CD4-positive, alpha-beta T cell (primary cell): ENCODE measurements at regions of chrX and their contacts with region 1.

Region 1: GRCh38 chrX:136880452-136881013 is at the start of gene RBMX:
- DNase-seq: peak; percentile 82 to 94 (median 88)
- ATAC-seq: peak; percentile 83
- H3K4me3 ChIP-seq: peak within 1 kb of the TSS; percentile 97
- H3K4me3 Mint-ChIP-seq: peak within 1 kb of the TSS; percentile 100
- H3K27ac ChIP-seq: peak within 1 kb of the TSS; percentile 94 to 97
- H3K27ac Mint-ChIP-seq: peak within 1 kb of the TSS; percentile 99
- H3K4me1 ChIP-seq: peaks cover 28% of the 10 kb centered on the region
- H3K4me1 Mint-ChIP-seq: peaks cover 34% of the 10 kb centered on the region
- H3K27me3 ChIP-seq: no peaks in the 10 kb centered on the region
- H3K27me3 Mint-ChIP-seq: no peaks in the 10 kb centered on the region
- CTCF ChIP-seq: no peak
- total RNA-seq, gene RBMX: 310 to 317 TPM

Region 2: DNA sequence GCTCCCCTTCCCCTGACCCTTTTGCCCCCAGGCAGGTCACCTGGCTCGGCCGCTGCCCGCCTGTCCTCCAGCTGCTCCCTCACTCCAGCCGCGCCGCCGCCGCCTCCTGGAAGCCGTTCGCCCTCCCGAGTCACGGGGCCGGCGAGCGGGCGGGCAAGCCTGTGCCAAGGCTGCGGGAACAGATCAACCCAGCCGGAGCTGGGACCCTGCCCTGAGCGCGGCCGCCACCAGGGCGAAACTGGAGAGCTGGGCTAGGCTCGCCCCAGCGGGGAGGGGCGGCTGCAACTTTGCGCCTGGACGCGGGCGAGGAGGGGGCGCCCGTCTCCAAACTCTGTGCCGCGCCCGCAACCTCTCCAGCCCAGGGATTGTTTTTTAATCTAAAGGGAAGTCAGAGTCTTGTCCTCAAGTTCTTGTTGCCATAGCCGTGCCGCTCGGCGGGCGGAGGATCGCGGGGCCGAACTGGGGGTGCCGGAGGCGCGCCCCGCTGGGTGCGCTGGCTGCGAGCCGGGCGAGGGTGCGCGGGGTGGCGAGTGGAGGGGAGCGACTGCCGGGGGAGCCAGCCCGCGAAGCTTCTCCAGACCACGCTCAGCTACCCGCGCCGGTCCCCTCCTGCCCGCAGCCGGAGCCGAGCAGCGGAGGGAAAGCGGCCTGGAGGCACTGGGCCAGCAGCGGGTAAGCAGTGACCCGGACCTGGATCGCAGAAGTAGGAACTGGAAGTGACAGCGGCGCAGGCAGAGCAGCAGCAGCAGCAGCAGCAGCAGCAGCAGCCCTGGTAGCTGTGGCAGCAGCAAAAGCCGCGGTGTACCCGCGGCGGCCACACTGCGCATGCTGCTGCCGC is 113.2 kb before region 1 on chrX:
- CTCF ChIA-PET with region 1: no interaction called
- POLR2A ChIA-PET with region 1: interaction called, 36 read pairs
- intact Hi-C with region 1: loop called (anchors 2 to 10 kb)
- DNase-seq: peak in 13 of 14 experiments; percentile 28 to 78 (median 39)
- ATAC-seq: peak; percentile 77
- H3K4me3 ChIP-seq: peak overlapping the region; percentile 59
- H3K4me3 Mint-ChIP-seq: peak overlapping the region; percentile 87
- H3K27ac ChIP-seq: peak overlapping the region in 1 of 2 donors; percentile 53
- H3K27ac Mint-ChIP-seq: peak overlapping the region; percentile 93
- H3K4me1 ChIP-seq: peaks cover 50% of the 10 kb centered on the region
- H3K4me1 Mint-ChIP-seq: peaks cover 77% of the 10 kb centered on the region
- H3K27me3 ChIP-seq: no peaks in the 10 kb centered on the region
- H3K27me3 Mint-ChIP-seq: no peaks in the 10 kb centered on the region
- CTCF ChIP-seq: no peak

Region 3: DNA sequence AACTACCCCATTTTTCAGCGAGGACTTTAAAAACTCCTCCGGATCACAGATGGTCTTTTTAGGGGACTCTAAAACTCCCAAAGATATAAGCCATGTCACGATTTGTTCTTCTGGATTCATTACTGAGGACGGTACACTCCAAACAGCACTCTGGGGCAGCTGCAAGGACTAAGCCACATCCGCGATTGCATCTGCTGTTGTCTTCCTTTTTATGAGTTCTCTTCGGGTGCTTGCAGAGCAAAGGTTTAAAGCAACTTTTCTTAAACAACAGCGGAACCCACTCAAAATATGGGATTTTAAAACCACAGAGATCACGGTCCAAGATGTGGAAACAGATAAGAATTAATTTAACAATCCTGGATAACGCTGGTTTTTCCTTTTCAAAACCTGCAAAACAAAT is 99.8 kb before region 1 on chrX and contains the start of gene ARHGEF6:
- CTCF ChIA-PET with region 1: no interaction called
- POLR2A ChIA-PET with region 1: interaction called, 38 read pairs
- intact Hi-C with region 1: no loop called
- DNase-seq: peak in 12 of 14 experiments; percentile 9 to 66 (median 38)
- ATAC-seq: peak; percentile 60
- H3K4me3 ChIP-seq: peak within 1 kb of the TSS; percentile 79
- H3K4me3 Mint-ChIP-seq: peak within 1 kb of the TSS; percentile 98
- H3K27ac ChIP-seq: peak within 1 kb of the TSS; percentile 65 to 84
- H3K27ac Mint-ChIP-seq: peak within 1 kb of the TSS; percentile 95
- H3K4me1 ChIP-seq: peaks cover 29% of the 10 kb centered on the region
- H3K4me1 Mint-ChIP-seq: peaks cover 75% of the 10 kb centered on the region
- H3K27me3 ChIP-seq: no peaks in the 10 kb centered on the region
- H3K27me3 Mint-ChIP-seq: no peaks in the 10 kb centered on the region
- CTCF ChIP-seq: no peak
- total RNA-seq, gene ARHGEF6: 43.3 to 45.3 TPM

Region 4: GRCh38 chrX:136866337-136867095 is 14.0 kb before region 1 on chrX:
- CTCF ChIA-PET with region 1: interaction called, 3 read pairs
- POLR2A ChIA-PET with region 1: interaction called, 27 read pairs
- intact Hi-C with region 1: no loop called
- DNase-seq: no peak
- ATAC-seq: peak; percentile 14
- H3K4me3 ChIP-seq: no peak overlapping the region
- H3K4me3 Mint-ChIP-seq: peak overlapping the region; percentile 8
- H3K27ac ChIP-seq: no peak overlapping the region
- H3K27ac Mint-ChIP-seq: peak overlapping the region; percentile 66
- H3K4me1 ChIP-seq: peaks cover 4% of the 10 kb centered on the region
- H3K4me1 Mint-ChIP-seq: peaks cover 43% of the 10 kb centered on the region
- H3K27me3 ChIP-seq: no peaks in the 10 kb centered on the region
- H3K27me3 Mint-ChIP-seq: no peaks in the 10 kb centered on the region
- CTCF ChIP-seq: no peak

Region 5: DNA sequence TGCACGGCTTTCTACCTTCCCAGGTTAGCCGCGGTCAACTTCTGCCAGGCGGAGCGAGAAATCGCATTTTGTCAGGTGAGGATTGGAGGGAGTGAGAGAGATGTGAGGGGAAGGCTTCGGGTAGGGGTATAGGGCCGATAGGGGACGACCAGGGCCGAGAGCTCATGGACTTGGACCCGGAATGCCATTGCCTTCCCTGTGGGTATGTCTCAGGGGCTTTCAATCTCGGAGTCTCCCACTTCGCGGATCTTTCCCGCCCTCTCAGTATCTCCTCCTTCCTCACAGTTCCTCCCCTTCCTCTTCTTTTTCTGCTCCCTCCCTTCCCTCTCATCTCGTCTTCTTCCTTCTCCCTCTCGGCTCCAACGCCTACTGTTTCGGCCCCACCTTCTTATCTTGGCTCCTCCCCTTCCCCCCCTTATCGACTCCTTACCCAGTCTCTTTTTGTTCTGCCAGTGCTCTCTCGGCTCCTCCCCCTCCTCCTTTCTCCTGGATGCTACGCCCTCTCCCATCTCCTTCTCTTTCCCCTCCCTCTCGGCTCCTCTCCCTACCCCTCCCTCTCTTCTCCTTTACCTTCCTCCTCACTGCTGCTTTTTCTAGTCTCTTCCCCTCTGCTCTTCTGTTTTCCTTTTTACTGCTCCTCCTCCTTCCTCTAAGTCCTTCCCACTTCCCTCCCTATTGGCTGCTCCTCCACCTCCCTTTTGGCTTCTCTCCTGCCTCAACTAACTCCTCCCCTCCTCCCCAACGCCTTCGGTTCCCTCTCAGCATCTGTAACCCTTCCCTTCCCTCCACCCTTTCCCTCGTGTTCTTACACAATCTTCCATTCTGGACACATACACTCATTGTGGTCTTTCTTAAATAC is 29.4 kb after region 1 on chrX:
- CTCF ChIA-PET with region 1: no interaction called
- POLR2A ChIA-PET with region 1: interaction called, 27 read pairs
- intact Hi-C with region 1: loop called (anchors 1 kb)
- DNase-seq: peak; percentile 20 to 82 (median 44)
- ATAC-seq: peak; percentile 63
- H3K4me3 ChIP-seq: peak overlapping the region; percentile 91
- H3K4me3 Mint-ChIP-seq: peak overlapping the region; percentile 99
- H3K27ac ChIP-seq: peak overlapping the region; percentile 78 to 85
- H3K27ac Mint-ChIP-seq: peak overlapping the region; percentile 83
- H3K4me1 ChIP-seq: peaks cover 10% of the 10 kb centered on the region
- H3K4me1 Mint-ChIP-seq: peaks cover 11% of the 10 kb centered on the region
- H3K27me3 ChIP-seq: no peaks in the 10 kb centered on the region
- H3K27me3 Mint-ChIP-seq: no peaks in the 10 kb centered on the region
- CTCF ChIP-seq: no peak